ENCODE measurements at regions of chr4 and their contacts with region 1.

Region 1: DNA sequence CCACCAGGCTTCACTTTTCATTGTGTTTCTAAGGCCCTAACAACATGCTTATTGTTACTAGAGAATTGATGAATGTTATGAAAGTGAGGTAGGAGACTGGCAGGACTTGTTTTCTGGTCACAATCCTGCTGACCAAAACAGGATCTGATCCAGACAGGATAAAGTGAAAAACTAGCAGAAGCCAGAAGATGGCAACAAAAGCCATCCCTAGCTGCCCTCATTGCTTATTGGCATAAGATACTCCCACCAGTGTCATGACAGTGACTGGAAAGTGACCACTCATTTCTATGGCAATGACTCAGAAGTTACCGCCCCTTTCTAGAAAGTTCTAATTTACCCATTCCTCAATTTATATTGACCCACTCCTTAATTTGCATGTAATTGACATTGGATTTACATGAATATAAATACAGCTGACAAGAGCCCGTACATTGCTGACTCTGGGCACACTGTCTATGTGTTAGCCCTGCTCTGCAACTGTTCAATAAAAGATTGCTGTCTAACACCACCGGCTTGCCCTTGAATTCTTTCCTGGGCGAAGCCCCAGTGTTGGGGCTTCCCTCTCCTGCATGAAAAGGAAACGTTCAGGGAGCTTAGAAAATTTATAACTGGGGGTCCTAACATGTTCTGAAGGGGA is 30.0 kb upstream of the FGG start:
- DNase-seq: no peak
- H3K4me3 ChIP-seq: no peak overlapping the region
- CTCF ChIP-seq: no peak

Region 2: DNA sequence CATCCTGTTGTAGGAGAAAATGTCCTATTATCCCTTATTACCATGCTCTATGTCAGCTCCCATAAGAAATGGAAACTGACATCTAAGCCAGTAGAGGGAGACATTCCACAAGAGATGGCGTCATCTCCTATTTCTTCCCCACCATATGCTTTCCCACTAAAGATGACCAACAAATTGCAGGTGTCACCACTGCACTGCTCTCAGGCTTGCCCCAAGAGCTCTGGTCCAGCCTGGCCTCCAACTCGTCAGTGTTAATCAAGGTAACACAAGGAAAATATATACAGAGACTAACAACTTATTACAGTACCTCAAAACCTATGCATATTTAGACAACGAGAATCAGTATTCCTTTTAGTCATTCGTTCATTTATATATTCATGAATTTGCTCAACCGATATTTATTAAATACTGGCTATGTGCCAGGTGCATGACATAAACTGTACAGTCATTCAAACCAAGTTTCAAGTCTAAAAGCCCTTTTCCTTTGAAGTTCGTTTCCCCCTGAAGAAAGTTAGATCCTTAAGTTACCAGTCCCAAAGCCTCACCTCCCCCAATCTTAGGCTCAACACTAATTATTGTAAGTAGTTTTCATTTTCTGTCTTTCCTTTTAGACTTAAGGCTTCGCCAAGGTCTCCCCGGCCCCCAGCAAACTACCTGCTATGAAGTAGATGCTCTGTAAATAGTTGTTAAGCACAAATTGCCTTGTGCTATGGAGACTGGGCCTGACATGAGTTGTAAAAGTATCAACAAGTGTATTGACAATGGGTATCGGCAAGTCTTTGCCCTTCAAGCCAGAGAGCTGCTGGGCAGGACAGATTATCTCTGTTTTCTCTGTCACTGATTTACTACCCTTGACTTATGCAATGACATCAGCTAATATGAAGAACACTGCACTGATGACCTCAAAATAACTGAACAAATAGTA is 82.7 kb before region 1 on chr4:
- CTCF ChIA-PET with region 1: interaction called, 13 read pairs
- POLR2A ChIA-PET with region 1: no interaction called
- DNase-seq: no peak
- H3K4me3 ChIP-seq: no peak overlapping the region
- CTCF ChIP-seq: peak; percentile 59

Region 3: DNA sequence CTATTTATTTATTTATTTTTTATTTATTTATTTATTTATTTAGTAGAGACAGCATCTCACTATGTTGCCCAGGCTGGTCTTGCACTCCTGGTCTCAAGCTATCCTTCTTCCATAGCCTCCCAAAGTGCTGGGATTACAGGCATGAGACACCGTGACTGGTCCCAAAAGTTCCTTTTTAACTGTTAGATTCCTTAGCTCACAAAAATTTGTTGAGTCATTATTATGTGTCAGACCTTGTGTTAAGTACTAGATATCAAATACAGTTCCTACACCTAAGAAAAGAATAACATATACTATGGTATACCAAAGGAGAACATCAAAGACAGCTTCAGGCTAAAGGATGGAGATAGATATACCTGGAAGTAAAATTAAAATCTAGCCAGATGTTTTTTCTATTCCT is 63.6 kb before region 1 on chr4:
- CTCF ChIA-PET with region 1: no interaction called
- POLR2A ChIA-PET with region 1: no interaction called
- DNase-seq: no peak
- H3K4me3 ChIP-seq: no peak overlapping the region
- CTCF ChIP-seq: no peak

Region 4: DNA sequence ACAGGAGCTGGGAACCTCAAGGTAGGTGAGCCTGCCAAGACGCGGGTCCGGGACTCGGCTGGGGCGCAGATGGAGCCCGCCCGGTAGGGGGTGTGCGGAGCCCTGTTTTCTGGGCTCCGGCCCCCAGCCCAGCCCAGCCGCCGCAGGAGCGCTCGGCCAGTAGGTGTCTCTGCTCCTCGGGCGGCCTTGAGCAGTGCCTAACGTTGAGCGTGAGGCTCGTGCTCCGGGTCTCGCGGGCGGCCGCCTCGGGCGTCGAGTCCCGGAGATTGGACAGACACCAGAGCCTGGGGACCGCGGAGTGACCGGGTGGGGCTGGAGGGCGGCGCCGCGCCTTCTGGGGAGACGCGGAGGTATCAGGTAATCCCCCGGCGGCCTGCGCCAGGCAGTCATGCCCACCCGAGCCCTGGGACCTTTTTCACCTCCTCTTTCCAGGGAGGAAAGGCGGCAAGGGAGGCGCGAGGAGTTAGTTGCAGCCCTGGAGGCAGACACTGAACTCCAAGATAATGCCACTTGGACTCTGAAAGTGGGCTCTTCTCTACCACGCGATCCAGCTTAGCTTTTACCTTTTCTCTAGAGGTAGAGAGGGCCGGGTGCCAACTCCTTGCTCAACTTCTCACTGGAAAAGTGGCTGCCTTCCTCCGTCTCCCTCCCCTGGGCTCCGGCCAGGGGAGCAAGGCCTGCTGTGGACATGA is 15.6 kb before region 1 on chr4:
- CTCF ChIA-PET with region 1: interaction called, 34 read pairs
- POLR2A ChIA-PET with region 1: no interaction called
- DNase-seq: no peak
- H3K4me3 ChIP-seq: peak overlapping the region; percentile 23
- CTCF ChIP-seq: peak; percentile 52

Region 5: DNA sequence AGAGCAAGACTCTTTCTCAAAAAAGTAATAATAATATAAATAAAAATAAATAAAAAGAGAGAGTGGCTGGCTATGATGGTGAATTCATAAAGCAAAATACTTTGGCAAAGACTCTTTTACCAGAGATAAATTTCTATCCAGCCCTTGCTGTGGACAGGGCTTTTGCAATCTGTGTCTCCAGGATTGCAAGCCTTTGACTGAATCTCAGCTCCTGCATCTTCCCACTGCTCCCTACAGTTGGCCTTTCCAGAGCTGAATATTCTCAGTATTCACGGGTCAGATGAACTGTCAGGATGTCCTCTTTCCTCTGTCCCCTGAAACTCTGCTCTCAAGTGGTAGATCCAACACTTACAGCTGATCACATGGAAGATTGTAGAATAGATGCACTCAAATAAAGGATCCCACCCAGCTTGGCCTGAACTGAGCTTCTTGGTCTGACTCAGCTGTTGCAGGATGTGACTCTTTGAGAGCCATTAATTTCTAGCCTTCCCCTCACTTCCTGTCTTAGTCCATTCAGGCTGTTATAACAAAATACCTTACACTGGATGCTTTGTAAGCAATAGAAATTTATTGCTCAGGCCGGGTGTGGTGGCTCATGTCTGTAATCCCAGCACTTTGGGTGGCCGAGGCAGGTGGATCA is 900.8 kb after region 1 on chr4:
- CTCF ChIA-PET with region 1: no interaction called
- POLR2A ChIA-PET with region 1: no interaction called
- DNase-seq: no peak
- H3K4me3 ChIP-seq: no peak overlapping the region
- CTCF ChIP-seq: no peak

Measured in AG04449 (cell line).